GM10248 (cell line): ENCODE measurements at regions of chr15 and their contacts with region 1.

Region 1: DNA sequence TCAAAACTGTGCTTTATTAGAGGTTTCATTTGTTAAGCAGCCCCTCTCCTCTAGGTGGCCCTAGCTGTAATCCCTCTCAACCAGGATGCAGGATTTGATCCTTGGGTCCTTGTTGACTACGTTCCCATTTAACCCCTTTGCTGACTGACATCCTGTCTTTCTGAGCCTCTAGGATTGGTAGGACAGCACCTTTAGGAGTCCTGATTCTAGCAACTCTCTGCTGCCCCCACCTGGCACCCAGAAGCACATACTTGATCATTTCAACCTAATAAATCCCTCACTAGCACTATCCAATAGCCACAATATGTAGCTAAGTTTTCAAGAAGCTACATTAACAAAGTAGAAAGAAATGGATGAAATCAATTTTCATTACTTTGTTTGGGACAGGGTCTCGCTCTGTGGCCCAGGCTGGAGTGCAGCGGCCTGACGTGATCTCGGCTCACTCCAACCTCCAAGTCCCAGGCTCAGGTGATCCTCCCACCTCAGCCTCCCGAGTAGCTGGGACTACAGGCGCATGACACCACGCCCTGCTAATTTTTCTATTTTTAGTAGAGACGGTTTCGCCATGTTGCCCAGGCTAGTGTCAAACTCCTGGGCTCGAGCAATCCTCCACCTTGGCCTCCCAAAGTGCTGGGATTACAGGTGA is 28.3 kb downstream of the RSL24D1 start:
- DNase-seq: peak; percentile 61
- CTCF ChIP-seq: peak; percentile 83

Region 2: DNA sequence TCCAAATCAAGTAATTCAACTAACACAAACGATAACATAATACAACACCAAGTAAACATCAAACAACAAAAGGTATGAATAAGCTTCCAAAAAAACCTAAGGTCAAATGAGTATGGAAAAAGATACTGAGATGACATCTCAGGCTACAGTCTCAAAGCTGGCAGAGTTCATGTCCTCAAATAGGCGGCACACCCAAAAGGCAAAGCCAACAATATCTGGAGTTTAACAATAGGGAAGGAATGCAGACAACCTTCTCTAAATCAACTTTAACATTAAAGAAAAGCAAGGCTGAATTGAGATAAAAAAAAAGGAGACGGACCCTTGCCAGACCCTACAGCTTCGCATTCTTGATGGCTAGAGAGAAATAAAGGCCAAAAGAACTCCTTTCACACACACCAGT is 318.3 kb before region 1 on chr15:
- CTCF ChIA-PET with region 1: no interaction called
- POLR2A ChIA-PET with region 1: no interaction called
- DNase-seq: no peak
- CTCF ChIP-seq: no peak

Region 3: DNA sequence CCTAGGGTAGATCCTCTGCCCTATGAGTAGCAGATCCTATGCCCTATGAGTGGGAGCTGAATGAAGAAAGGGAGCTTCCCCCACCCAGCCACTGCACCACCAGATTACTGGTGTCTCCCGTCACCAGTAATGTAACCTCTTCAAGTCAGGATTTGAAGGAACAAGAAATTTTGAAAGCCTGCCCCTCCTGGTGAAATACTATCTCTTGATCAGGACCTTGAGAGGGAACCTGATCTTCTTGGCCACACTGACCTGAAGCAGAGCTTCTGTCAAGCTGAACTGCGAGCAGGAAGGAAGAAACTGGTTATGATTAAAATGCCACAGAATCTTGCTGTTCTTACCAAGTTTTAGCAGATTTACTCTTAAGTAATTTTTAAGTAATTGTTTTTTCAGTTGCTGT is 34.5 kb before region 1 on chr15:
- CTCF ChIA-PET with region 1: no interaction called
- POLR2A ChIA-PET with region 1: no interaction called
- DNase-seq: no peak
- CTCF ChIP-seq: no peak

Region 4: DNA sequence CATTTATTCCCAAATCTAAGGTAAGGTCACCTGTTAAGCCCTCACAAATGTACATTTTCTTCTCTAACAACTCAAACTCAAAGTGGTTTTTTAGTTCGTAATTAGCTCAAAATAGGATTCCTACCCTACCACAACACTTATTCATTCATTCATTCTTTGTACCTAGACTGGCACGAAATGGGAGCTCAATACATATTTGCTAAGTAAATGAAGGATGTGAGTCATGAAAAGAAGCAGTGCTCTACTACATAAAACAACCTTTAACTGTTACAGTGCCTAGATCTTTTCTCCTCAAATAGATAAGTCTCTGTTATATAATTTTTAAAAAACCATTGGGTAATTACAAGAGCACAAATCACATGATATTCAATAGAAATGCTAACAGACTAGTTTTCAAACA is 15.2 kb after region 1 on chr15:
- CTCF ChIA-PET with region 1: interaction called, 23 read pairs
- POLR2A ChIA-PET with region 1: no interaction called
- DNase-seq: no peak
- CTCF ChIP-seq: no peak